GM12878 (cell line): ENCODE measurements at regions of chr2 and their contacts with region 1.

Region 1: GRCh38 chr2:122707224-122707824 is 951.9 kb downstream of the TSN start:
- DNase-seq: peak; percentile 70
- ATAC-seq: peak; percentile 76
- H3K4me3 ChIP-seq: no peak overlapping the region
- H3K27ac ChIP-seq: peak overlapping the region; percentile 58
- H3K4me1 ChIP-seq: peaks cover 4% of the 10 kb centered on the region
- H3K27me3 ChIP-seq: no peaks in the 10 kb centered on the region
- CTCF ChIP-seq: no peak
- EP300 ChIP-seq: peak; percentile 84 to 93; a peak in 3 of 4 replicates
- POLR2A ChIP-seq: no peak
- RAD21 ChIP-seq: no peak

Region 2: GRCh38 chr2:122340246-122340645 is 367.1 kb before region 1 on chr2:
- CTCF ChIA-PET with region 1: no interaction called
- POLR2A ChIA-PET with region 1: no interaction called
- RAD21 ChIA-PET with region 1: interaction called, 3 read pairs
- SMC1A ChIA-PET with region 1: no interaction called
- in situ Hi-C with region 1: no loop called
- intact Hi-C with region 1: loop called (anchors 1 kb)
- DNase-seq: peak; percentile 39
- ATAC-seq: peak; percentile 97
- H3K4me3 ChIP-seq: no peak overlapping the region
- H3K27ac ChIP-seq: no peak overlapping the region
- H3K4me1 ChIP-seq: peaks cover 6% of the 10 kb centered on the region
- H3K27me3 ChIP-seq: no peaks in the 10 kb centered on the region
- CTCF ChIP-seq: no peak
- EP300 ChIP-seq: peak; percentile 79 to 91; a peak in 3 of 4 replicates
- POLR2A ChIP-seq: no peak
- RAD21 ChIP-seq: no peak

Region 3: DNA sequence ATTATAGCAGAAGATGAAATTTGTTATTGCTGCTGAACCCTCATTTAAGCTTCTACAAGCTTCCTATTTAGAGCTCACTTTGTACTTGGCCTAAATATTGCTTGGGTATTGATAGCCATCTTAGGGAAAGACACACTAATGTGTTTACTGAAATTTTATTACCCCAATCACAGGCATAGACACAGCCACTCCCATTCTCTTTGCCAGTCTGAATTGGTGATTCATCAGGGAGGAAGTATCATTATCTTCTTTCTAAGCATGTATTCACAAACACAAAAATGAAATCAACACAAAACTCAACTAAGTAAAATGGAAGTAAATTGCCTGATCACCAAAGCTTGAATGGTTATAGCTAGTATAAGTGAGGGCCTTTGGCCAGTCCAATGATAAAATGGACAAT is 285.5 kb before region 1 on chr2:
- CTCF ChIA-PET with region 1: no interaction called
- POLR2A ChIA-PET with region 1: no interaction called
- RAD21 ChIA-PET with region 1: no interaction called
- SMC1A ChIA-PET with region 1: no interaction called
- in situ Hi-C with region 1: no loop called
- intact Hi-C with region 1: no loop called
- DNase-seq: no peak
- ATAC-seq: no peak
- H3K4me3 ChIP-seq: no peak overlapping the region
- H3K27ac ChIP-seq: no peak overlapping the region
- H3K4me1 ChIP-seq: no peaks in the 10 kb centered on the region
- H3K27me3 ChIP-seq: no peaks in the 10 kb centered on the region
- CTCF ChIP-seq: no peak
- EP300 ChIP-seq: no peak
- POLR2A ChIP-seq: no peak
- RAD21 ChIP-seq: no peak

Region 4: DNA sequence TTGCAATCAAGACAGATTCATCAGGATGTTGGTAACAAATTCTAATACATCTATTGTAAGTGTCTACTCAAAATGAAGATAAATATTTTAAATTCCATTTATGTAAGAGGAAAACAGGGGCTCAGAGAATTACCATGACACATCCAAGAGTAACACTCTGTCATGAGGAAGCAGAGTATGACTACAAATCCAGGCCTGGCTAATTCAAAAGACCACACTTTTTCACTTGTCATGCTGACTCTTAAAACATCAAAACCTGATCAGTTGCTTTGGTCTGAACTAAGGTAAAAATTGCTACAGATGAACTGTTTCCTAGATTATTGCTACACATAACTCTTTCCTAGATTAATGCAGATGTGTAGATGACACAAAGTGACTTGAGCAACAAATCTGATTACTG is 71.2 kb before region 1 on chr2:
- CTCF ChIA-PET with region 1: no interaction called
- POLR2A ChIA-PET with region 1: no interaction called
- RAD21 ChIA-PET with region 1: interaction called, 3 read pairs
- SMC1A ChIA-PET with region 1: interaction called, 3 read pairs
- in situ Hi-C with region 1: no loop called
- intact Hi-C with region 1: loop called (anchors 5 kb)
- DNase-seq: no peak
- ATAC-seq: peak; percentile 69
- H3K4me3 ChIP-seq: no peak overlapping the region
- H3K27ac ChIP-seq: no peak overlapping the region
- H3K4me1 ChIP-seq: no peaks in the 10 kb centered on the region
- H3K27me3 ChIP-seq: no peaks in the 10 kb centered on the region
- CTCF ChIP-seq: no peak
- EP300 ChIP-seq: no peak
- POLR2A ChIP-seq: no peak
- RAD21 ChIP-seq: no peak

Region 5: GRCh38 chr2:122681626-122682025 is 25.7 kb before region 1 on chr2:
- CTCF ChIA-PET with region 1: interaction called, 5 read pairs
- POLR2A ChIA-PET with region 1: interaction called, 4 read pairs
- RAD21 ChIA-PET with region 1: interaction called, 25 read pairs
- SMC1A ChIA-PET with region 1: interaction called, 33 read pairs
- in situ Hi-C with region 1: no loop called
- intact Hi-C with region 1: no loop called
- DNase-seq: no peak
- ATAC-seq: peak; percentile 68
- H3K4me3 ChIP-seq: no peak overlapping the region
- H3K27ac ChIP-seq: no peak overlapping the region
- H3K4me1 ChIP-seq: no peaks in the 10 kb centered on the region
- H3K27me3 ChIP-seq: no peaks in the 10 kb centered on the region
- CTCF ChIP-seq: no peak
- EP300 ChIP-seq: no peak
- POLR2A ChIP-seq: no peak
- RAD21 ChIP-seq: no peak

Region 6: DNA sequence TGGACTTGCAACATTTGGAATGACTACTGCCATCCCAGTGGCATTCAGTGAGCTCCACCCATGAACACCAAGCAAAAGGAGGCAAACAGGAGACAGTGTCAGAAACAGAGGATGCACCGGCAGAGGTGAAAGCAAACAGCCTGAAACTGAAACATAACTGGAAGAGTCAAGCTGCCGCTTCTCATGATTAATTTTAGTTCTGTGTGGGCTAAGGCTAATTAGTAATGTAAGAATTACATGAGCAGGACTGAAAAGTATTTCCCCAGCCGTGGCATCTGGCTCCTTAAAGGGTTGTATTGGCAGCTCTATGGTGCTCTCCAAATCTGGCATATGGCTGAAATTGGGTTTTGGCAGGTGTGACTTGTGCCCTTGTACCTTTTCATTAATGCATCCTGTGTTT is 156.2 kb after region 1 on chr2:
- CTCF ChIA-PET with region 1: no interaction called
- POLR2A ChIA-PET with region 1: no interaction called
- RAD21 ChIA-PET with region 1: interaction called, 5 read pairs
- SMC1A ChIA-PET with region 1: interaction called, 3 read pairs
- in situ Hi-C with region 1: no loop called
- intact Hi-C with region 1: loop called (anchors 10 kb)
- DNase-seq: peak; percentile 38
- ATAC-seq: peak; percentile 89
- H3K4me3 ChIP-seq: no peak overlapping the region
- H3K27ac ChIP-seq: no peak overlapping the region
- H3K4me1 ChIP-seq: no peaks in the 10 kb centered on the region
- H3K27me3 ChIP-seq: no peaks in the 10 kb centered on the region
- CTCF ChIP-seq: no peak
- EP300 ChIP-seq: peak; percentile 40 to 48; a peak in 1 of 4 replicates
- POLR2A ChIP-seq: no peak
- RAD21 ChIP-seq: no peak